ENCODE measurements at regions of chr11 and their contacts with region 1.

Region 1: DNA sequence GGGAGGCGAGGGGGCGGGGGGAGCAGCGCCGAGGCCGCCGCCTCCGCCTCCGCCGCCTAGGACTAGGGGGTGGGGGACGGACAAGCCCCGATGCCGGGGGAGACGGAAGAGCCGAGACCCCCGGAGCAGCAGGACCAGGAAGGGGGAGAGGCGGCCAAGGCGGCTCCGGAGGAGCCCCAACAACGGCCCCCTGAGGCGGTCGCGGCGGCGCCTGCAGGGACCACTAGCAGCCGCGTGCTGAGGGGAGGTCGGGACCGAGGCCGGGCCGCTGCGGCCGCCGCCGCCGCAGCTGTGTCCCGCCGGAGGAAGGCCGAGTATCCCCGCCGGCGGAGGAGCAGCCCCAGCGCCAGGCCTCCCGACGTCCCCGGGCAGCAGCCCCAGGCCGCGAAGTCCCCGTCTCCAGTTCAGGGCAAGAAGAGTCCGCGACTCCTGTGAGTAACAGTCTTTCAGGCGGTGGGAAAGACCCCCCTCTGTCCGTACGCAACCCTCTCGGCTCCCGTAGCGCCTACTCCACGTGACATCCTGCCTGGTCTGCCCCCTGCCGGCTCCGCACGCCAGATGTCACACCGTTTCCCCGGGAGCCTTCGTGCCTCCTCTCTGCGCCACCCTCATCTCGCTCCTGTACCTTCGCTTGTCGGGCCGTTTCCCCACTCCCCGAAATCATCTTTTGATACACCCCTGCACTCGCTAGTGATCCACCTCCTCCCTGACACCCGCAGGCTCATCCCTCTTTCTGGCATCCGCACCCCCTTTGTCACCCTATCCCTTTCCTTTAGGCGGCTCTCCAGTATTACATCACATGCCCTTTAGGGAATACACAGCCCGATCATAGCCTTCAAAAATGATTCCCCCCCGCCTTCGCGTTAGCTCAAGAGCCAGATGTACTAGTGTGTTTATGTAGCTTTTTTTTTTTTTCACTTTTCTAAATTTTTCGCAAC is 598 bp downstream of the ZFP91 start:
- DNase-seq: peak; percentile 95
- H3K4me3 Mint-ChIP-seq: peak overlapping the region; percentile 87
- H3K27ac Mint-ChIP-seq: peak overlapping the region; percentile 100
- H3K4me1 Mint-ChIP-seq: peaks cover 46% of the 10 kb centered on the region
- H3K27me3 Mint-ChIP-seq: no peaks in the 10 kb centered on the region

Region 2: DNA sequence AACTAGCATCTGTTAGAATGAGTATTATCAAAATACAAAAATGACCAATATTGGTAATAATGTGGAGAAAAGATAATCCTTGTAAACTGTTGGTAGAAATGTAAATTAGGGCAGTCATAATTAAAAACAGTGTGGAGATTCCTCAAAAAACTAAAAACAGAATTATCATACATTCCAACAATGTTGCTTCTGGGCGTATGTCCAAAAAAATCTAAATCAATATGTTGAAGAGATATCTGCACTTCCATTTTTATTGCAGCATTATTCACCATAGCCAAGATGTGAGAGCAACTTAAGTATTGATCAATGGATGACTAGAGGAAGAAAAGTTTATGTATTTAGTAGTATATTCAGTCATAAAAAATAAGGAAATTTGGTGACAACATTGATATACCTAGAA is 1771.1 kb before region 1 on chr11:
- CTCF ChIA-PET with region 1: no interaction called
- POLR2A ChIA-PET with region 1: no interaction called
- intact Hi-C with region 1: no loop called
- DNase-seq: no peak
- H3K4me3 Mint-ChIP-seq: no peak overlapping the region
- H3K27ac Mint-ChIP-seq: no peak overlapping the region
- H3K4me1 Mint-ChIP-seq: no peaks in the 10 kb centered on the region
- H3K27me3 Mint-ChIP-seq: no peaks in the 10 kb centered on the region

Region 3: GRCh38 chr11:57567515-57568329 is 1011.7 kb before region 1 on chr11 and contains the start of gene UBE2L6:
- CTCF ChIA-PET with region 1: no interaction called
- POLR2A ChIA-PET with region 1: no interaction called
- intact Hi-C with region 1: loop called (anchors 1 kb)
- DNase-seq: peak; percentile 70
- H3K4me3 Mint-ChIP-seq: peak within 1 kb of the TSS; percentile 92
- H3K27ac Mint-ChIP-seq: peak within 1 kb of the TSS; percentile 98
- H3K4me1 Mint-ChIP-seq: peaks cover 31% of the 10 kb centered on the region
- H3K27me3 Mint-ChIP-seq: no peaks in the 10 kb centered on the region
- total RNA-seq, gene UBE2L6: 152 to 162 TPM

Region 4: GRCh38 chr11:57741132-57742086 is 838.1 kb before region 1 on chr11 and contains the start of gene SELENOH:
- CTCF ChIA-PET with region 1: interaction called, 3 read pairs
- POLR2A ChIA-PET with region 1: interaction called, 5 read pairs
- intact Hi-C with region 1: loop called (anchors 1 kb)
- DNase-seq: peak; percentile 98
- H3K4me3 Mint-ChIP-seq: peak within 1 kb of the TSS; percentile 97
- H3K27ac Mint-ChIP-seq: peak within 1 kb of the TSS; percentile 99
- H3K4me1 Mint-ChIP-seq: peaks cover 40% of the 10 kb centered on the region
- H3K27me3 Mint-ChIP-seq: no peaks in the 10 kb centered on the region
- total RNA-seq, gene SELENOH: 235 to 252 TPM

Region 5: DNA sequence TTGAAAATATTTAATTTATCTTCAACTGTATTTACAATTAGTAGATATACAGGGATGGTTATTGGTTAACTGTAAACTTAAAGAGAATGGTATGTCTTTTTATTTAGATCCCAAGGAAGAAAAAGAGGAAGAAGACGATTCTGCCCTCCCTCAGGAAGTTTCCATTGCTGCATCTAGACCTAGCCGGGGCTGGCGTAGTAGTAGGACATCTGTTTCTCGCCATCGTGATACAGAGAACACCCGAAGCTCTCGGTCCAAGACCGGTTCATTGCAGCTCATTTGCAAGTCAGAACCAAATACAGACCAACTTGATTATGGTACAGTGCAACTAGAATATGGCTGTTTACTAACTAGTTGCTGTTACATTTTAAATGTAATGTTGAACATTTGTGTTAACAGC is 30.3 kb after region 1 on chr11:
- CTCF ChIA-PET with region 1: interaction called, 5 read pairs
- POLR2A ChIA-PET with region 1: interaction called, 8 read pairs
- intact Hi-C with region 1: loop called (anchors 2 kb)
- DNase-seq: no peak
- H3K4me3 Mint-ChIP-seq: no peak overlapping the region
- H3K27ac Mint-ChIP-seq: no peak overlapping the region
- H3K4me1 Mint-ChIP-seq: peaks cover 58% of the 10 kb centered on the region
- H3K27me3 Mint-ChIP-seq: no peaks in the 10 kb centered on the region

Region 6: GRCh38 chr11:58726737-58727414 is 147.4 kb after region 1 on chr11:
- CTCF ChIA-PET with region 1: no interaction called
- POLR2A ChIA-PET with region 1: no interaction called
- intact Hi-C with region 1: loop called (anchors 5 kb)
- DNase-seq: no peak
- H3K4me3 Mint-ChIP-seq: no peak overlapping the region
- H3K27ac Mint-ChIP-seq: peak overlapping the region; percentile 62
- H3K4me1 Mint-ChIP-seq: peaks cover 26% of the 10 kb centered on the region
- H3K27me3 Mint-ChIP-seq: peaks cover 1% of the 10 kb centered on the region

Region 7: GRCh38 chr11:59152312-59152951 is 573.0 kb after region 1 on chr11:
- CTCF ChIA-PET with region 1: no interaction called
- POLR2A ChIA-PET with region 1: no interaction called
- intact Hi-C with region 1: loop called (anchors 1 kb)
- DNase-seq: peak; percentile 55
- H3K4me3 Mint-ChIP-seq: peak overlapping the region; percentile 53
- H3K27ac Mint-ChIP-seq: peak overlapping the region; percentile 92
- H3K4me1 Mint-ChIP-seq: peaks cover 41% of the 10 kb centered on the region
- H3K27me3 Mint-ChIP-seq: no peaks in the 10 kb centered on the region

Measured in activated CD4-positive, alpha-beta memory T cell treated with anti-CD3 and anti-CD28 coated beads for 36 hours (primary cell).